SK-N-SH (cell line): ENCODE measurements at regions of chr7 and their contacts with region 1.

Region 1: DNA sequence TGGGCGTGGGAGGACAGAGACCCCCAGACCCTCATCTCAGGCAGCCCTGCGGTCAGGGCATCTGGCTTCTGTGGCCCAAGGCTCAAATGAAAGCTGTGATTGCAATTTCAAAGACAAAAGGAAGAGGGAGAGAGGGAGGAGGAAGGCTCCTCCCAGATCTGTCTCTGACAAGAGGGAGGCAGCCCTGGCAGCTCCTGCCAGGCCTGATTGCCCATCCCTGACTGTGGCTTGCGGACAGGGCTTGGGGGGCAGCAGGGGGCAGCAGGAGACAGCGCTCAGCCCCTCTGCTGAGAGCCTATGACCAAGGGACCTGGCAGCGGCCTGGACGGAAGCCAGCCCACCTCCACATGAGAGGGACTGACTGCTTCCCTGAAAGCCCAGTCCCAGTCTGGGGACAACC is 91.8 kb downstream of the PTPRN2 start:
- DNase-seq: peak; percentile 98
- H3K4me3 ChIP-seq: no peak overlapping the region
- H3K27ac ChIP-seq: peak overlapping the region in 1 of 2 experiments; percentile 64; a peak in 2 of 4 replicates
- H3K4me1 ChIP-seq: peaks cover 0 to 24% of the 10 kb centered on the region in 2 experiments; a peak in 2 of 4 replicates
- H3K27me3 ChIP-seq: no peaks in the 10 kb centered on the region
- CTCF ChIP-seq: peak; percentile 18
- EP300 ChIP-seq: no peak
- RAD21 ChIP-seq: peak; percentile 91

Region 2: DNA sequence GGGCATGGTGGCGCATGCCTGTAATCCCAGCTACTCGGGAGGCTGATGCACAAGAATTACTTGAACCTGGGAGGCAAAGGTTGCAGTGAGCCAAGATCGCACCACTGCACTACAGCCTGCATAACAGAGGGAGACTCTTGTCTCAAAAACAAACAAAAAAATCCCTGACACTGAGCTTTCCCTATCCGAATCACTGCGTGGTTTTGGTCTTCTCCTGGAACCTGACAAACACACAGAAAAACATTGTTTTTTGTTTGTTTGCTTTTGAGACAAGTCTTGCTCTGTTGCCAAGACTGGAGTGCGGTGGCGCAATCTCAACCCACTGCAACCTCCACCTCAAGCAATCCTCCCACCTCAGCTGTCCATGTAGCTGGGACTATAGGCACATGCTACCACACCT is 142.2 kb after region 1 on chr7:
- CTCF ChIA-PET with region 1: interaction called, 10 read pairs
- POLR2A ChIA-PET with region 1: no interaction called
- DNase-seq: no peak
- H3K4me3 ChIP-seq: no peak overlapping the region
- H3K27ac ChIP-seq: no peak overlapping the region
- H3K4me1 ChIP-seq: no peaks in the 10 kb centered on the region; a peak in 1 of 4 replicates
- H3K27me3 ChIP-seq: no peaks in the 10 kb centered on the region
- CTCF ChIP-seq: no peak
- EP300 ChIP-seq: no peak
- RAD21 ChIP-seq: no peak

Region 3: GRCh38 chr7:158646766-158647447 is 151.1 kb after region 1 on chr7:
- CTCF ChIA-PET with region 1: interaction called, 16 read pairs
- POLR2A ChIA-PET with region 1: no interaction called
- DNase-seq: peak; percentile 58
- H3K4me3 ChIP-seq: no peak overlapping the region
- H3K27ac ChIP-seq: no peak overlapping the region
- H3K4me1 ChIP-seq: peaks cover 11 to 12% of the 10 kb centered on the region in 2 experiments; a peak in 3 of 4 replicates
- H3K27me3 ChIP-seq: no peaks in the 10 kb centered on the region
- CTCF ChIP-seq: peak; percentile 69
- EP300 ChIP-seq: no peak
- RAD21 ChIP-seq: peak; percentile 28